Dorsolateral prefrontal cortex (tissue), 120 donors: ENCODE measurements at regions of chr22 and their contacts with region 1.

Region 1: DNA sequence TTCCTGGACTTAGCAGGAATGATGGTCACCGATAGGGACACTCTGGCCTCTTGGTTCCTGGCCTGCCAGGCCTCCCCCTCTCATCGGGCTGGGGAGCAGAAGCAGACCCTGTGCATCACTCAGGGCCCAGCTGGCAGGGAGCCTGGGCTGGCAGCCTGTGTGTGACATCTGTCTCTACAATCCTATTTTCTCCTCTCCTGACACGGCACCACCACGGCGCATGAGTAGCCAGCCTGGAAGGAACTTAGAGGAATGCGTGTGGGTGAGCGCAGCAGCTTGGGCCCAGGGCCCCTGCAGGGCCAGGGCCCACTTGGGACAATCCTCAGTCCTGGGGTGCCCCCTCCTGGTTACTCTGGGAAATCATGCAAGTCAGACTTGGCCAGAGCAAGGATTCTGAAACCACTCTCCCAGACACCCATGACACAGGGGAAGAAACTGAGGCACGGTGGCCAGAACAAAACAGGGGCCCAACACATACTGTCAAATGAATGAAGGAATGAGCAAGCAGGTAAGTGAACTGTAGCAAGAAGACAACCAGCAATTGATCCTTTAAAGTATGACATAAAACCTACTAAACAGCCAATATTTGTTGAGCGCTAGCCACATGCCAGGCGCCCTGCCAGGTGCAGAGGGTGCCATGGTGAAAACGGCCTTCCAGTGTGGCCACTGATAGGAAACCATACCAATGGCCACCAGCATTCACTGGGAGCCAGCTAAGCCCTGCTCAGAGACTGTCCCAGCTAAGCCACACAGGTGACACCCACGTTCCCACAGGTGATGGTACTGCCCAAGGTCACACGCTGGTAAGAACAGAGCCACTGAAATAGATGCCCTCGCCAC is 13.3 kb downstream of the RSPH14 start:
- DNase-seq: peak; percentile 79 to 92 (median 88)
- H3K4me3 ChIP-seq: no peak overlapping the region
- H3K27ac ChIP-seq: peak overlapping the region; percentile 40 to 100 (median 86)
- H3K27me3 ChIP-seq: no peaks in the 10 kb centered on the region
- CTCF ChIP-seq: peak; percentile 64 to 98 (median 91)

Region 2: DNA sequence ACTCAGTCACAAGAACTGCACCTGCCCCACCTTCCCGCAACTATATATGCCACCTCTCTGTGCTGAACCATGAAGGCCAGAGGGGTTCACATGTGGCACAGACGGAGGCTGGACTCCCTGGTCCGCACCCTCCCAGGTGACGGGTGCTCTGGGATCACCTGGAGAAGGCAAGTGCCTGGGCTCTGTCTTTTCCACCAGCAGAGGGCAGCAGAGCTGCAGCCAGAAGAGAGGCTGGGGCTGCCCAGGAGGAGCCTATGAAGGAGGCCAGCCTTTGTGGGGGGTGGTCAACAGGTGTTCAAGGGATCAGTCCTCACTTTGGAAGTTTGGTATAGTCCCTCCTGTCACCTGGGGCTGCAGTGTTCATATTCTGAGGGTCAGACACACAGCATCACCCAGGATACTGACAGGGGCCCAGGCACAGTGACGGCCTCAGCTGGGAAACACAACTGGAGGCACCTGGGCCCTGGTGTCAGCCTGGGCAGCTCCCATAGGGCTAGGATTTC is 280.1 kb before region 1 on chr22:
- intact Hi-C with region 1: loop called in 1 of 2 experiments (anchors 10 kb)
- DNase-seq: peak in 6 of 10 donors; percentile 15 to 49 (median 35)
- H3K4me3 ChIP-seq: no peak overlapping the region
- H3K27ac ChIP-seq: no peak overlapping the region
- H3K27me3 ChIP-seq: peaks cover 0 to 25% (median 4%) of the 10 kb centered on the region in 45 donors
- CTCF ChIP-seq: peak; percentile 26 to 90 (median 81)

Region 3: GRCh38 chr22:23054531-23055257 is 73.8 kb before region 1 on chr22:
- intact Hi-C with region 1: no loop called
- DNase-seq: peak in 3 of 10 donors; percentile 12 to 38 (median 34)
- H3K4me3 ChIP-seq: no peak overlapping the region
- H3K27ac ChIP-seq: peak overlapping the region in 24 of 59 donors; percentile 19 to 76 (median 48)
- H3K27me3 ChIP-seq: no peaks in the 10 kb centered on the region
- CTCF ChIP-seq: no peak

Region 4: DNA sequence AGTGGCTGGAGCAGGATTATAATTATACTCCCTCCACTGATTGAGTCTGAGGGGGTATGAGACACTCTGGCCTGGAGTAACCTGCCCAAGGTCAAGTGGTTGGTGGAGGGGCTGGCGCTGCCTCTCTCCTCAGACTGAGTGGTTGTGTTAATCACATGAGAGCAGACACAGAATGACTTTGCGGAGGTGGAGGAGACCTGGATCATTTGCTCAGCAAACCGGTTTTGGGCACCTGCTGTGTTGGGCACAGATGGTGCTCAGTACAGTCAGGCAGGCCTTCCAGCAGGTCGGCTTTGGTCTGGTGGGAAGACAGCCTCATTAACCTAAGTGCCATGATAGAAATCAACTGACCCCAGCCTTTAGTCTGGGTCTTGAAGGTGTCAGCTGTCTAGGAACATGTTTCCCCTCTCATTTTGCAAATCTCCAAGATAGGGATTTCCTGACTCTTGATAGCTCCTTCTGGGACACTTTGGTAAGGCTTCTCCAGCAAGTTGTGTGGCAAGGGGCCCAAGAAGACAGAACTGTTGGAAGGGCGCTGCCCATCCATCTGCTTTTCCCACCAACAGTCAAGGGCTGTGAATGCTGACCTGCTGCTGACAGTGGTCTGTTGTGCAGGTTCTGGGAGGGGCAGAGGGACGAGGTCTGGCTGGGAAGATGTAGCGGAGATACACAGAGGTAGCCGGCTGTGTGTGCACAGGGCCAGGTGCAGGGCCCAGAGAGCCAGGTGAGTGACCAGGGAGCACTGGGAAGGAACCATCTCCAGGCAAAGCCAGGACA is 63.9 kb after region 1 on chr22:
- intact Hi-C with region 1: no loop called
- DNase-seq: peak in 1 of 10 donors; percentile 78
- H3K4me3 ChIP-seq: no peak overlapping the region
- H3K27ac ChIP-seq: peak overlapping the region in 14 of 59 donors; percentile 8 to 60 (median 29)
- H3K27me3 ChIP-seq: no peaks in the 10 kb centered on the region
- CTCF ChIP-seq: no peak

Region 5: DNA sequence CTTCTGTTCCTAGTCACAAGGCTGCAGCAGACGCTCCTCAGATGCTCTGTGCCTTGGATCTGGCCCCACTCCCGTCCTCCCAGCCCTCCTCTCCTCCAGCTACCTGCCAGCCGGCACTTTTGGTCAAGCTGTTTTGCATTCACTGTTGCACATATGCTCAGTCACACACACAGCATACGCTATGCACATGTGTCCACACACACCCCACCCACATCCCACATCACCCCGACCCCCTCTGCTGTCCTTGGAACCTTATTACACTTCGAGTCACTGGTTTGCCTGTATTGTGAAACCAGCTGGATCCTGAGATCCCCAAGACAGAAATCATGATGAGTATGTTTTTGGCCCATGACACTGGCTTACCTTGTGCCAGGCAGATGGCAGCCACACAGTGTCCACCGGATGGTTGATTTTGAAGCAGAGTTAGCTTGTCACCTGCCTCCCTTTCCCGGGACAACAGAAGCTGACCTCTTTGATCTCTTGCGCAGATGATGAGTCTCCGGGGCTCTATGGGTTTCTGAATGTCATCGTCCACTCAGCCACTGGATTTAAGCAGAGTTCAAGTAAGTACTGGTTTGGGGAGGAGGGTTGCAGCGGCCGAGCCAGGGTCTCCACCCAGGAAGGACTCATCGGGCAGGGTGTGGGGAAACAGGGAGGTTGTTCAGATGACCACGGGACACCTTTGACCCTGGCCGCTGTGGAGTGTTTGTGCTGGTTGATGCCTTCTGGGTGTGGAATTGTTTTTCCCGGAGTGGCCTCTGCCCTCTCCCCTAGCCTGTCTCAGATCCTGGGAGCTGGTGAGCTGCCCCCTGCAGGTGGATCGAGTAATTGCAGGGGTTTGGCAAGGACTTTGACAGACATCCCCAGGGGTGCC is 161.6 kb after region 1 on chr22:
- intact Hi-C with region 1: no loop called
- DNase-seq: peak in 7 of 10 donors; percentile 40 to 90 (median 62)
- H3K4me3 ChIP-seq: no peak overlapping the region
- H3K27ac ChIP-seq: peak overlapping the region in 38 of 59 donors; percentile 3 to 91 (median 46)
- H3K27me3 ChIP-seq: no peaks in the 10 kb centered on the region
- CTCF ChIP-seq: peak; percentile 41 to 83 (median 73)